K562 (cell line): ENCODE measurements at regions of chr12 and their contacts with region 1.

Region 1: GRCh38 chr12:76777765-76778216 is 13.9 kb downstream of the ZDHHC17 start:
- DNase-seq: peak in 2 of 4 experiments; percentile 42 to 61
- ATAC-seq: peak; percentile 73
- H3K4me3 ChIP-seq: peak overlapping the region; percentile 3; the same call in 1 of the 2 replicates
- H3K27ac ChIP-seq: peak overlapping the region; percentile 73
- H3K4me1 ChIP-seq: peaks cover 13 to 31% of the 10 kb centered on the region in 2 experiments
- H3K27me3 ChIP-seq: no peaks in the 10 kb centered on the region
- CTCF ChIP-seq: no peak
- EP300 ChIP-seq: no peak; the same call in 1 of the 2 replicates
- POLR2A ChIP-seq: no peak
- RAD21 ChIP-seq: no peak

Region 2: DNA sequence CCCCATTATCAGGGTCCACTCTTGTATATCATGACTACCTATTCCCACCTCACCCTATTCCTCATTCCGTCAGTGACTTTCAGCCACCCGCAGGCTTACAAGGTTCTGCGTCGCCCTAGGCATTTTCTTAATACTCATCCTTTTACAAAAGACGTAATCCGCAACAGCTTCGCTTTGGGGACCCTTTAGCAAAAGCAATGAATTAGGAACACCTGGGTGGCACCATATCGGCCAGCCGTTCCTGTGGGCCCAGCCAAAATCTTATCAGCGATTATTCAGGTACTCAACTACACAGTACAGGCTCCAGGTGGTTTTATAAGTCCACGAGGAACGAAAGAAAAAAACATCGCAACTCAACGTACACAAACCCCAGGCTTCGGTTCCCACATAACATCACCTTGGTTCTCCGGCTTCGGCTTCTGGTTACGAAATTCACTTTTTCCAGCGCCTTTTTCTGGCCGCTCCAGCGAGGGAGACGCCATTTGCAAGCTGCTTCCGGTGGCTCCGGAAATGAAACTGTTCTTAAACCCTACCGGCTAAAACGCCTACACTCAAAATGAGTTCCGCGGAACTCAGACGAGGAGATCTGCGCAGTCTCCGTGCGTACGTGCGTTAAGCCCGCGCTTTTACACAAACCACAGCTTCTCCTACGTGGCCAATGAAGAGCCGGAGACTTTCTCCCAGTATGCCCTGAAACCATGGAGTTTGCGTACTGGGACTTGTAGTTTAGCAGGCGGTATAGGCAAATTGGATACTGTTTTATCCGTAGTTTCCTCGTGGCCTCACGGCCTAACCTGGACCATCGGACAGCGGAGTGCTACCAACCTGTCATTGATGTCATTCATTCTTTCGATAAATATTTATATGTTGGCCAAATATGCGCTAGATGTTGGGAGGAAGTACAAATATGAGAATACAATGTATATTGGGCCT is 1266.4 kb before region 1 on chr12 and contains the start of gene KRR1:
- CTCF ChIA-PET with region 1: no interaction called
- POLR2A ChIA-PET with region 1: no interaction called
- in situ Hi-C with region 1: no loop called
- intact Hi-C with region 1: loop called (anchors 10 kb)
- DNase-seq: peak; percentile 78 to 97 (median 82)
- ATAC-seq: peak; percentile 99
- H3K4me3 ChIP-seq: peak within 1 kb of the TSS; percentile 84
- H3K27ac ChIP-seq: peak within 1 kb of the TSS; percentile 85
- H3K4me1 ChIP-seq: peaks cover 0 to 9% of the 10 kb centered on the region in 2 experiments; a peak in 1 of 5 replicates
- H3K27me3 ChIP-seq: no peaks in the 10 kb centered on the region
- CTCF ChIP-seq: peak in 1 of 3 experiments; percentile 2; a peak in 1 of 6 replicates
- EP300 ChIP-seq: peak; percentile 42; the same call in 1 of the 2 replicates
- POLR2A ChIP-seq: peak; percentile 91
- RAD21 ChIP-seq: 0 out of 4 replicates have a peak, but pooled peaks of 1 of the 2 experiments have one; percentile 11
- polyA plus RNA-seq, gene KRR1: 49.9 to 68.5 TPM

Region 3: DNA sequence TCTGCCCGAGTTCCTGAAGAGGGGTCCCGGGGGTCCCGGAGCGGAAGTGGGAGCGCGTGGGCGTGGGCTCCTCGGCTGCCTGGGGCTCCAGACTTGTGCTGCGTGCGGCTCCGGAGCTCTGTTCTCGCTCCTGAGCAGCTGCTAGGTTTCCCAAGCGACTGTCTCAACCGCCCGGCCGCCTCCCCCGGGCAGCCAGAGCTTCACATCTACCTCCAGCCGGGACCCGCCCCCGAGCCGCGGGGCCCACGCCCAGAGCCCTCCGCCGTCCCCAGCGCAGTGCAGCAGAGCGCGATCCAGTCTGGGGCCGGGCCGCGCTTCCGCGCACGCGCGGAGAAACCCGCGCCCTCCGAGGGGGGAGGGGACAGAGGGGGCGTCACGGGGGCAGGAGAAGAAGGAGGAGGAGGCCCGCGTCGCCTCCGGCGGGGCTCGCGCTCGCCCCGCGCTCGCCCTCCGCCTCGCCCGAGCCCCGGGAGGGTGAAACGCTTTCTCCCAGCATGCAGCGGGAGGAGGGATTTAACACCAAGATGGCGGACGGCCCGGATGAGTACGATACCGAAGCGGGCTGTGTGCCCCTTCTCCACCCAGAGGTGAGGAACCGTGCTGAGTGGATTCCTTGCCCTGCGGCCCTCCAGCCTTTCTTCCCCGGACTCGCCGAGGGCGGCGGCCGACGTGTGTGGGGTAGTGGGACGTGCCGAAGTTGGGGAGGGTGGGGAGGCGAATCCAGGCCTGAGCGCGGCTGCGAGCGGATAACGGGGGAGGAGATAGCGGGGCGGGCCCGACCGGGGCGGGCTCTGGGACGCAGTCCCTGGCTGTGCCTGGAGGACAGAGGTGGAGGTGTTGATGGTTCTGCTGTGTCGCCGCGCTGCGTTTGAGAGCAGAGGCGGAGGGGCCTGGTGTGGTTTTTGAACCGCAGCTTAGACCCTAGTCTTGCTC is 13.8 kb before region 1 on chr12 and contains the start of gene ZDHHC17:
- CTCF ChIA-PET with region 1: no interaction called
- POLR2A ChIA-PET with region 1: interaction called, 10 read pairs
- in situ Hi-C with region 1: no loop called
- intact Hi-C with region 1: loop called (anchors 2 kb)
- DNase-seq: peak; percentile 94 to 95 (median 94)
- ATAC-seq: peak; percentile 93
- H3K4me3 ChIP-seq: peak within 1 kb of the TSS; percentile 87
- H3K27ac ChIP-seq: peak within 1 kb of the TSS; percentile 97
- H3K4me1 ChIP-seq: peaks cover 8 to 22% of the 10 kb centered on the region in 2 experiments; a peak in 4 of 5 replicates
- H3K27me3 ChIP-seq: no peaks in the 10 kb centered on the region
- CTCF ChIP-seq: no peak
- EP300 ChIP-seq: peak; percentile 10
- POLR2A ChIP-seq: peak; percentile 94
- RAD21 ChIP-seq: no peak
- polyA plus RNA-seq, gene ZDHHC17: 6.7 to 12.4 TPM

Region 4: GRCh38 chr12:76790564-76791552 is 13.1 kb after region 1 on chr12:
- CTCF ChIA-PET with region 1: no interaction called
- POLR2A ChIA-PET with region 1: no interaction called
- in situ Hi-C with region 1: no loop called
- intact Hi-C with region 1: no loop called
- DNase-seq: peak; percentile 29 to 41 (median 31)
- ATAC-seq: peak; percentile 29; the same call in 1 of the 3 replicates
- H3K4me3 ChIP-seq: no peak overlapping the region
- H3K27ac ChIP-seq: no peak overlapping the region
- H3K4me1 ChIP-seq: peaks cover 4 to 7% of the 10 kb centered on the region in 2 experiments; a peak in 3 of 5 replicates
- H3K27me3 ChIP-seq: no peaks in the 10 kb centered on the region
- CTCF ChIP-seq: peak in 2 of 3 experiments; percentile 60 to 76; a peak in 4 of 6 replicates
- EP300 ChIP-seq: no peak
- POLR2A ChIP-seq: no peak
- RAD21 ChIP-seq: peak; percentile 90 to 91

Region 5: DNA sequence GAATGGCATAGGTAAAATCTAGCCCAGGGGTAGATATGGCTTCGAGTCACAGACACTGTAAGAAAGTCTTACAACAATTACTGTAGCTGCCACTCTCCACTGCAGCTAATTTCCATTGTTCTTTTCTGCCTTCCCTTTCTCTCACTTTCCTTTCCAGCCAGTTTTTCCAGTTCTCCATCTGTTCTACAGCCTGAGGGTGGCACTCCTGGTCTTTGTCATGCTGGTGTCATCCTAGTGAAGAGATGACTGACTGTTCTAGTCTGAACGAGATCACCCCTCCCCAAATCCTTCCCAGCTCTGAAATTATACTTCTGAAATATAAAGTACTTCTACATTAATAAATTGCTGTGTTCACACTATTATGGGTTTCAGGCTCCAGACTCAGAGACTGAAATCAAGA is 175.2 kb after region 1 on chr12:
- CTCF ChIA-PET with region 1: no interaction called
- POLR2A ChIA-PET with region 1: no interaction called
- in situ Hi-C with region 1: no loop called
- intact Hi-C with region 1: no loop called
- DNase-seq: no peak
- ATAC-seq: no peak
- H3K4me3 ChIP-seq: no peak overlapping the region
- H3K27ac ChIP-seq: no peak overlapping the region
- H3K4me1 ChIP-seq: no peaks in the 10 kb centered on the region
- H3K27me3 ChIP-seq: no peaks in the 10 kb centered on the region; a peak in 1 of 5 replicates
- CTCF ChIP-seq: no peak
- EP300 ChIP-seq: no peak
- POLR2A ChIP-seq: no peak
- RAD21 ChIP-seq: peak in 1 of 2 experiments; percentile 27; a peak in 2 of 4 replicates